Naive thymus-derived CD4-positive, alpha-beta T cell (primary cell): ENCODE measurements at regions of chr9 and their contacts with region 1.

Region 1: GRCh38 chr9:89466451-89467277 is 31.2 kb downstream of the SEMA4D start:
- DNase-seq: peak in 1 of 9 donors; percentile 68
- ATAC-seq: peak; percentile 1
- H3K4me3 ChIP-seq: peak overlapping the region; percentile 43
- H3K4me3 Mint-ChIP-seq: peak overlapping the region; percentile 67 to 92 (median 86)
- H3K27ac ChIP-seq: peak overlapping the region; percentile 74
- H3K27ac Mint-ChIP-seq: peak overlapping the region; percentile 86 to 99 (median 97)
- H3K4me1 ChIP-seq: peaks cover 96 to 99% of the 10 kb centered on the region in 2 donors
- H3K4me1 Mint-ChIP-seq: peaks cover 79 to 99% (median 95%) of the 10 kb centered on the region in 7 donors
- H3K27me3 ChIP-seq: no peaks in the 10 kb centered on the region
- H3K27me3 Mint-ChIP-seq: no peaks in the 10 kb centered on the region

Region 2: GRCh38 chr9:89428901-89429890 is 37.5 kb before region 1 on chr9:
- CTCF ChIA-PET with region 1: interaction called, 5 read pairs
- POLR2A ChIA-PET with region 1: interaction called, 3 read pairs
- intact Hi-C with region 1: loop called in 1 of 2 experiments (anchors 1 kb)
- DNase-seq: peak in 7 of 9 donors; percentile 68 to 83 (median 77)
- ATAC-seq: peak; percentile 76
- H3K4me3 ChIP-seq: no peak overlapping the region
- H3K4me3 Mint-ChIP-seq: peak overlapping the region in 9 of 10 donors; percentile 38 to 78 (median 63)
- H3K27ac ChIP-seq: peak overlapping the region; percentile 63
- H3K27ac Mint-ChIP-seq: peak overlapping the region; percentile 84 to 97 (median 92)
- H3K4me1 ChIP-seq: peaks cover 81 to 84% of the 10 kb centered on the region in 2 donors
- H3K4me1 Mint-ChIP-seq: peaks cover 67 to 100% (median 95%) of the 10 kb centered on the region in 7 donors
- H3K27me3 ChIP-seq: no peaks in the 10 kb centered on the region
- H3K27me3 Mint-ChIP-seq: no peaks in the 10 kb centered on the region

Region 3: DNA sequence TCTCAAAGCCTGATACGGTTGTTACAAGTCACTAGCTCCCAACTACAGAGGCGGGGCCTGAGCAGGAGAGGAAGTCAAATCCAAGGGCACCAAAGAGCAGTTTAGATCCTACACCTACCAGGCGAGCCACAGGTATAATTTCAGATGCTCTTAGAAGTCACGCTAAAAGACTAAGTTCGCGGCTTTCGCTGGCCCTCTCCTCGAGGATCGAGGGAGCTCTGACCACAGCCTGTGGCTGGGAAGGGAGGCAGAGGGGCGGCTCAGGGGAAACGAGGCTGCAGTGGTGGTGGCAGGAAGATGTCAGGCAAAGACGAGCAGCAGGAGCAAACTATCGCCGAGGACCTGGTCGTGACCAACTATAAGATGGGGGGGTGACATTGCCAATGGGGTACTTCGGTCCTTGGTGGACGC is 17.4 kb before region 1 on chr9:
- CTCF ChIA-PET with region 1: interaction called, 4 read pairs
- POLR2A ChIA-PET with region 1: interaction called, 242 read pairs
- intact Hi-C with region 1: loop called in 1 of 2 experiments (anchors 1 kb)
- DNase-seq: no peak
- ATAC-seq: no peak
- H3K4me3 ChIP-seq: peak overlapping the region; percentile 14
- H3K4me3 Mint-ChIP-seq: peak overlapping the region; percentile 79 to 88 (median 80)
- H3K27ac ChIP-seq: peak overlapping the region; percentile 60
- H3K27ac Mint-ChIP-seq: peak overlapping the region; percentile 81 to 99 (median 97)
- H3K4me1 ChIP-seq: peaks cover 62 to 93% of the 10 kb centered on the region in 2 donors
- H3K4me1 Mint-ChIP-seq: peaks cover 71 to 100% (median 90%) of the 10 kb centered on the region in 7 donors
- H3K27me3 ChIP-seq: no peaks in the 10 kb centered on the region
- H3K27me3 Mint-ChIP-seq: no peaks in the 10 kb centered on the region

Region 4: GRCh38 chr9:89477811-89478630 is 11.4 kb after region 1 on chr9:
- CTCF ChIA-PET with region 1: interaction called, 4 read pairs
- POLR2A ChIA-PET with region 1: interaction called, 242 read pairs
- intact Hi-C with region 1: loop called (anchors 1 kb)
- DNase-seq: peak in 8 of 9 donors; percentile 49 to 78 (median 66)
- ATAC-seq: peak; percentile 63
- H3K4me3 ChIP-seq: peak overlapping the region; percentile 49
- H3K4me3 Mint-ChIP-seq: peak overlapping the region; percentile 80 to 92 (median 87)
- H3K27ac ChIP-seq: peak overlapping the region; percentile 78
- H3K27ac Mint-ChIP-seq: peak overlapping the region; percentile 90 to 99 (median 95)
- H3K4me1 ChIP-seq: peaks cover 74 to 82% of the 10 kb centered on the region in 2 donors
- H3K4me1 Mint-ChIP-seq: peaks cover 76 to 96% (median 90%) of the 10 kb centered on the region in 7 donors
- H3K27me3 ChIP-seq: no peaks in the 10 kb centered on the region
- H3K27me3 Mint-ChIP-seq: no peaks in the 10 kb centered on the region

Region 5: GRCh38 chr9:89489548-89490530 is 23.2 kb after region 1 on chr9:
- CTCF ChIA-PET with region 1: interaction called, 3 read pairs
- POLR2A ChIA-PET with region 1: interaction called, 45 read pairs
- intact Hi-C with region 1: loop called (anchors 1 to 2 kb)
- DNase-seq: peak in 8 of 9 donors; percentile 15 to 87 (median 78)
- ATAC-seq: peak; percentile 90
- H3K4me3 ChIP-seq: peak overlapping the region; percentile 22
- H3K4me3 Mint-ChIP-seq: peak overlapping the region; percentile 60 to 100 (median 88)
- H3K27ac ChIP-seq: peak overlapping the region; percentile 69
- H3K27ac Mint-ChIP-seq: peak overlapping the region; percentile 82 to 98 (median 89)
- H3K4me1 ChIP-seq: peaks cover 81 to 82% of the 10 kb centered on the region in 2 donors
- H3K4me1 Mint-ChIP-seq: peaks cover 78 to 100% (median 92%) of the 10 kb centered on the region in 7 donors
- H3K27me3 ChIP-seq: no peaks in the 10 kb centered on the region
- H3K27me3 Mint-ChIP-seq: no peaks in the 10 kb centered on the region

Region 6: DNA sequence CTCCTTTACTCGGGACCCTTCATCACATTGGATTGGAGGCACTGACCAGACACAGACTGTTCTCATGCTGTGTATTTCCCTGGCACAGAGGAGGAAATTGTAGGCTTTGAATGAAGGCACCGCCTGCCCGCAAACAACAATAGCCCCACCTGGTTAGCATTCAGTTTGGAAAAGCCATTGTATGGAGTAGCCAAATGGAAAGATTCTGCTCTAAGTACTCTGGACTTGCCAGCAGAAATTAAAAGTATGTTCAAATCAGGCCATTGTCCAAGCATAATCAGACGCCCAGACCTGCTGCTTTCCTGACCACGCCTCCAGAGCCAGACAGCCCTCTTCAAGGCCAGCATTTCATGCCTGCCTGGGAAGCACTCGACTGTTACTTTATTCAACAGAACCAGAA is 39.2 kb after region 1 on chr9:
- CTCF ChIA-PET with region 1: no interaction called
- POLR2A ChIA-PET with region 1: interaction called, 11 read pairs
- intact Hi-C with region 1: no loop called
- DNase-seq: no peak
- ATAC-seq: no peak
- H3K4me3 ChIP-seq: no peak overlapping the region
- H3K4me3 Mint-ChIP-seq: peak overlapping the region in 2 of 10 donors; percentile 4 to 49
- H3K27ac ChIP-seq: no peak overlapping the region
- H3K27ac Mint-ChIP-seq: peak overlapping the region in 6 of 9 donors; percentile 1 to 81 (median 77)
- H3K4me1 ChIP-seq: peaks cover 39 to 73% of the 10 kb centered on the region in 2 donors
- H3K4me1 Mint-ChIP-seq: peaks cover 69 to 96% (median 88%) of the 10 kb centered on the region in 7 donors
- H3K27me3 ChIP-seq: no peaks in the 10 kb centered on the region
- H3K27me3 Mint-ChIP-seq: no peaks in the 10 kb centered on the region

Region 7: GRCh38 chr9:89602978-89603766 is 136.5 kb after region 1 on chr9:
- CTCF ChIA-PET with region 1: no interaction called
- POLR2A ChIA-PET with region 1: no interaction called
- intact Hi-C with region 1: no loop called
- DNase-seq: peak; percentile 74 to 88 (median 85)
- ATAC-seq: peak; percentile 55
- H3K4me3 ChIP-seq: peak overlapping the region; percentile 72
- H3K4me3 Mint-ChIP-seq: peak overlapping the region; percentile 79 to 92 (median 88)
- H3K27ac ChIP-seq: no peak overlapping the region
- H3K27ac Mint-ChIP-seq: peak overlapping the region in 7 of 9 donors; percentile 12 to 88 (median 62)
- H3K4me1 ChIP-seq: peaks cover 12 to 23% of the 10 kb centered on the region in 2 donors
- H3K4me1 Mint-ChIP-seq: peaks cover 0 to 34% (median 23%) of the 10 kb centered on the region in 7 donors
- H3K27me3 ChIP-seq: no peaks in the 10 kb centered on the region
- H3K27me3 Mint-ChIP-seq: peaks cover 0 to 21% (median 0%) of the 10 kb centered on the region in 5 donors

Region 8: GRCh38 chr9:91361291-91362050 is 1894.8 kb after region 1 on chr9 and contains the start of gene AUH:
- CTCF ChIA-PET with region 1: no interaction called
- POLR2A ChIA-PET with region 1: no interaction called
- intact Hi-C with region 1: loop called in 1 of 2 experiments (anchors 10 kb)
- DNase-seq: peak; percentile 77 to 94 (median 87)
- ATAC-seq: peak; percentile 98
- H3K4me3 ChIP-seq: peak within 1 kb of the TSS; percentile 82
- H3K4me3 Mint-ChIP-seq: peak within 1 kb of the TSS; percentile 89 to 99 (median 98)
- H3K27ac ChIP-seq: peak within 1 kb of the TSS; percentile 82
- H3K27ac Mint-ChIP-seq: peak within 1 kb of the TSS; percentile 93 to 98 (median 96)
- H3K4me1 ChIP-seq: peaks cover 9 to 18% of the 10 kb centered on the region in 2 donors
- H3K4me1 Mint-ChIP-seq: peaks cover 38 to 59% (median 54%) of the 10 kb centered on the region in 7 donors
- H3K27me3 ChIP-seq: no peaks in the 10 kb centered on the region
- H3K27me3 Mint-ChIP-seq: no peaks in the 10 kb centered on the region
- total RNA-seq, gene AUH: 17.2 to 30.1 (median 25.9) TPM